CD4-positive, alpha-beta memory T cell (primary cell): ENCODE measurements at regions of chr18 and their contacts with region 1.

Region 1: DNA sequence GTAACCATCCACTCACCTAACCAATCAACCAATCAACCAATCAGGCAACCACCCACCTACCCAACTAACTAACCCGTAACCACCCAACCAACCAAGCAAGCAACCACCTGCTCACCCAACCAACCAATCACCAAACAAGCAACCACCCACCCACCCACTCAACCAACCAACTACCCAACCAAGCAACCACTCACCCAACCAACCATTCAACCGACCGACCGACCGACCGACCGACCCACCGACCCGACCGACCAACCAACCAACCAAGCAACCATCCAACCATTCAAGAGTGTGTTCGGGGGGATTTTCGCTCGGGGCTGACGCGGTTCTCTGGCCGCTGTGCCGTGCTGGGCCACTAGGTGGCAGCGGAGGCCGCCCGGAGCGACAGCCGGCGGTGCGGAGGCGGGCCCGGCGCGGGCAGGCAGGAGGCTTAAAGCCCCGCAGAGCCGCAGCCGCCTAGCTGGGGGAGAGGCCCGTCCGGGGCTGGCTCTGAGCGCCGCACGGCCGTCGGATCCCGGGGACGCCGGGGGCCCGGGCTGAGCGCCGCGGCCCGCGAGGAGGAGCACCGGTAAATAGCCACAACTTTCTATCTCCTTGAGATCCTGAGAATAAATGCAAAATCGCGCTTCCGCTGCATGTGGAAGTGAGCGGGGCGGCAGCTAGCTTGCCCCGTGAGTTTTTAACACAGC is at the start of gene MC5R:
- DNase-seq: peak; percentile 52 to 70 (median 64)
- H3K4me3 ChIP-seq: peak within 1 kb of the TSS in 1 of 2 donors; percentile 28
- H3K4me3 Mint-ChIP-seq: peak within 1 kb of the TSS in 7 of 8 donors; percentile 50 to 76 (median 66)
- H3K27ac ChIP-seq: no peak within 1 kb of the TSS
- H3K27ac Mint-ChIP-seq: peak within 1 kb of the TSS in 1 of 7 donors; percentile 23
- H3K4me1 ChIP-seq: peaks cover 4% of the 10 kb centered on the region
- H3K4me1 Mint-ChIP-seq: peaks cover 2 to 10% (median 5%) of the 10 kb centered on the region in 4 donors
- H3K27me3 ChIP-seq: peaks cover 5% of the 10 kb centered on the region
- H3K27me3 Mint-ChIP-seq: peaks cover 14 to 37% of the 10 kb centered on the region in 2 donors
- total RNA-seq, gene MC5R: not detected

Region 2: GRCh38 chr18:13464432-13465123 is 359.3 kb before region 1 on chr18:
- CTCF ChIA-PET with region 1: no interaction called
- POLR2A ChIA-PET with region 1: no interaction called
- intact Hi-C with region 1: no loop called
- DNase-seq: peak; percentile 56 to 83 (median 65)
- H3K4me3 ChIP-seq: peak overlapping the region; percentile 41 to 67
- H3K4me3 Mint-ChIP-seq: peak overlapping the region; percentile 86 to 96 (median 94)
- H3K27ac ChIP-seq: peak overlapping the region; percentile 47
- H3K27ac Mint-ChIP-seq: peak overlapping the region; percentile 88 to 97 (median 93)
- H3K4me1 ChIP-seq: peaks cover 60% of the 10 kb centered on the region
- H3K4me1 Mint-ChIP-seq: peaks cover 52 to 80% (median 63%) of the 10 kb centered on the region in 4 donors
- H3K27me3 ChIP-seq: no peaks in the 10 kb centered on the region
- H3K27me3 Mint-ChIP-seq: no peaks in the 10 kb centered on the region

Region 3: GRCh38 chr18:13813271-13813849 is 10.5 kb before region 1 on chr18:
- CTCF ChIA-PET with region 1: interaction called, 27 read pairs
- POLR2A ChIA-PET with region 1: no interaction called
- intact Hi-C with region 1: no loop called
- DNase-seq: peak in 4 of 5 donors; percentile 30 to 45 (median 32)
- H3K4me3 ChIP-seq: no peak overlapping the region
- H3K4me3 Mint-ChIP-seq: no peak overlapping the region
- H3K27ac ChIP-seq: no peak overlapping the region
- H3K27ac Mint-ChIP-seq: no peak overlapping the region
- H3K4me1 ChIP-seq: no peaks in the 10 kb centered on the region
- H3K4me1 Mint-ChIP-seq: peaks cover 0 to 2% (median under 1%) of the 10 kb centered on the region in 4 donors
- H3K27me3 ChIP-seq: no peaks in the 10 kb centered on the region
- H3K27me3 Mint-ChIP-seq: peaks cover 5 to 8% of the 10 kb centered on the region in 2 donors